ENCODE measurements at regions of chr11 and their contacts with region 1.

Region 1: GRCh38 chr11:17375547-17375946 is 12.9 kb downstream of the KCNJ11 start:
- DNase-seq: no peak
- H3K4me3 ChIP-seq: no peak overlapping the region
- H3K27ac ChIP-seq: no peak overlapping the region
- H3K4me1 ChIP-seq: no peaks in the 10 kb centered on the region
- H3K27me3 ChIP-seq: no peaks in the 10 kb centered on the region
- CTCF ChIP-seq: no peak
- EP300 ChIP-seq: no peak
- POLR2A ChIP-seq: no peak

Region 2: GRCh38 chr11:17405232-17406005 is 29.9 kb after region 1 on chr11:
- in situ Hi-C with region 1: no loop called
- intact Hi-C with region 1: loop called (anchors 1 kb)
- DNase-seq: peak; percentile 68
- H3K4me3 ChIP-seq: no peak overlapping the region
- H3K27ac ChIP-seq: peak overlapping the region; percentile 9 to 56 (median 52)
- H3K4me1 ChIP-seq: peaks cover 0 to 15% (median 6%) of the 10 kb centered on the region in 4 donors
- H3K27me3 ChIP-seq: no peaks in the 10 kb centered on the region
- CTCF ChIP-seq: peak in 1 of 5 experiments; percentile 23
- EP300 ChIP-seq: no peak
- POLR2A ChIP-seq: no peak

Measured in transverse colon (tissue), 4 donors.